Panc1 (cell line): ENCODE measurements at regions of chr3 and their contacts with region 1.

Region 1: DNA sequence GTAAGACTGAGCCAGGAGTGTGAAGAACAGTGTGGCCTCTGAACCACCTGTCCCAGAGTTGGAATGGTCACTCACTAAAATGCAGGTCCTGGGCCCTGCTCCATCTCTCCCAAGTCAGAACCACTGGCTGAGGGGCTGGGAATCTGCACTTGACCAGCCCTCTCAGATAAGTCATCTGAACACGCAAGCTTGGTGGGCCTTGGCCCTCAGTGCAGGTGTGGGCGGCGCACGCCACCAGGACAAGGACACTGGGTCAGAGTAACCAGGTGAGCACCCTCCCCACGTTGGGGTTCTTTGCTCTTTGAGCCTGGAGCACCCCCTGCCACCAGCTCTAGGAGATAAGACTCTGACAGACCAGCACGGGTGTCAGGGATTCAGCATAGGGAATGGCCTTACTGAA is 42.7 kb downstream of the KIF9 start:
- DNase-seq: no peak
- ATAC-seq: no peak
- H3K4me3 ChIP-seq: no peak overlapping the region
- H3K27ac ChIP-seq: no peak overlapping the region
- H3K4me1 ChIP-seq: no peaks in the 10 kb centered on the region
- H3K27me3 ChIP-seq: no peaks in the 10 kb centered on the region
- CTCF ChIP-seq: no peak

Region 2: GRCh38 chr3:47096959-47097358 is 143.0 kb before region 1 on chr3:
- CTCF ChIA-PET with region 1: interaction called, 11 read pairs
- POLR2A ChIA-PET with region 1: no interaction called
- in situ Hi-C with region 1: no loop called
- intact Hi-C with region 1: no loop called
- DNase-seq: no peak
- ATAC-seq: no peak
- H3K4me3 ChIP-seq: no peak overlapping the region
- H3K27ac ChIP-seq: no peak overlapping the region
- H3K4me1 ChIP-seq: no peaks in the 10 kb centered on the region
- H3K27me3 ChIP-seq: no peaks in the 10 kb centered on the region
- CTCF ChIP-seq: no peak

Region 3: GRCh38 chr3:47186285-47186684 is 53.6 kb before region 1 on chr3:
- CTCF ChIA-PET with region 1: no interaction called
- POLR2A ChIA-PET with region 1: no interaction called
- in situ Hi-C with region 1: no loop called
- intact Hi-C with region 1: no loop called
- DNase-seq: no peak
- ATAC-seq: no peak
- H3K4me3 ChIP-seq: no peak overlapping the region
- H3K27ac ChIP-seq: no peak overlapping the region
- H3K4me1 ChIP-seq: no peaks in the 10 kb centered on the region
- H3K27me3 ChIP-seq: no peaks in the 10 kb centered on the region
- CTCF ChIP-seq: no peak